Head of caudate nucleus (tissue), 42 donors: ENCODE measurements at regions of chr10 and their contacts with region 1.

Region 1: DNA sequence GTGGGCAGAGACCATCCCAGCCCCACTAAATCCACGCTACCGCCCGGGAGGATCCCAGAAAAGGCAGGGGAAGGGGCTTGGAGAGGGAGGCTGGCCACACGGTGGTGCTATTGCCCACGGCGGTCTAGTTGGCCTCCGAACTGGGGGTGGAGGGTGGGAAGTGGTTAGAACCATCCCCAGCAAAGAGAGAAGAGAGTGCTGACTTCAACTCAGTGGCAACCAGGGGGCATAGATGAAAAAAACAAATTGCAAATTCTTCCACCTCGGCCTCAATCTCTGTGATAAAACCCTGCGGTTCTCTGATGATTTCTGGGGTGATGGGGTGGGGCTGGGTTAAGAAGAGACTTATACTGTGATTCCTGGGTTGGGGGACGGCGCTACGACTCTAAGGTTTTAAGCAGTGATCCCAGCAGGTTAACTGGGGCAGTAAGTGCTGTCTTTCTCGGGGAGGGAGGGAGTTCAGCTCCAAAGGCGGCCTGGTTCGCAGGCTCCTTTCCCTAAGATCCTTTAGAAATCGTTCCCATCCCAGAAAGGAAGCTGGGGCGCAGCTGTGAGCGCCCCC is 154.5 kb upstream of the LYZL2 start:
- DNase-seq: peak; percentile 84 to 97 (median 92)

Region 2: DNA sequence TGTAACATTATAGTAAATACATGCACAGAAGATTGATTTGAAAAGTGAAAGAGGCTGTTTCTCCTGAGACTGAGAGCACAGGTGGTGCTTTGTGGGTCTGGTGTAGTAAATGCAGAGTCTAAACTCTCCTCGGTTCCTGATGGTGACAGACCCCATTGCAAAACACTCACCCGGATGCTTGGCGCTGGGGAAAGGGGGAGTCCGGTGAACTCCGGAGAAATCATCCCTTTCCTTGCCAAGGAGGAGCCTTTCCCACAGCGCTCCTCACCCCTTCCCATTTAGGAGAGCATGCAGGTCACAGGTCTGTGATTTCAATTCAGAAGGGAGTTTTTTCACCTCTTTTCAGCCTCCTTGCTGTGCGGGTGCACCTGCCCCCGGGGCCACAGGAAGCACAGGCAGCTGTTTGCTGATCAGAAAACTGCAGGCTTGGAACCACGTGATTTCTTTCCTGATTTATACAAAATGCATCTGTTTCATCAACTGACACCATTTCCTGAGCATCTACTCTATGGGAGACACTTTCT is 78.9 kb before region 1 on chr10:
- intact Hi-C with region 1: no loop called
- DNase-seq: no peak

Region 3: DNA sequence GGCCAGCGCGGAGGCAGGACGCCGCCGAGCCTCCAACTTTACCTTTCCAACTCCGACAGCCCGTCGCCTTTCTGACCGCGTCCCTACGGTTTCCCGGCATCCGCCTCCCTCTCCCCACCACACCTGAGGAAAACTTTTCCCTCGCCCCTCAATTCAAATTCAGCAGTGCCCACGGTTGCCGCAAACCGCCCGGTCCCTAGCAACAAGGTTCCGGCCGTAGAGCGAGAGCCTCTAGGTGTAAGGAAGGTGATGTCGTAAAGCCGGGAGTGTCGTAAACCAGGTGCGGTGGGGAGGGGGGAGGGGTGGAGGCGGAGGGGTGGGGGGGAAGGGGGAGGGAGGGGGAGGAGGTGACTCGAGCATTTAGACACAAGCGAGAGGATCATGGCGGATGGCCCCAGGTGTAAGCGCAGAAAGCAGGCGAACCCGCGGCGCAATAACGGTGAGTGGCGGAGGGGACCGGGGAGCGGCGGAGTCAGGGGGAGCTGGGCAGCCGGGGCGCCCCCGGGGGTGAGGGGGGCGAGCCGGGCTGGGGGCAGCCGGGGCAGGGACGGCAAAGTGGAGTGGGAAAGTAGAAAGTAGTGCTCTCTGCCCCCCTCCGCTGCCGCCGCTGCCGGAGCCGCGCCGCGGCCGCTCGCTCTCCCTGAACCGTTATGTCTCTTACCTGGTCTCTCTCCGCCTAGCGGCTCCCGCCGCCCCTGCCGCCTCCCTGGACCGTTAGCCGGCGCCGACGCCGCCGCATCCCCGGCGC is 535.0 kb after region 1 on chr10 and contains the start of gene ZEB1:
- intact Hi-C with region 1: loop called (anchors 10 kb)
- DNase-seq: peak; percentile 38 to 91 (median 76)

Region 4: DNA sequence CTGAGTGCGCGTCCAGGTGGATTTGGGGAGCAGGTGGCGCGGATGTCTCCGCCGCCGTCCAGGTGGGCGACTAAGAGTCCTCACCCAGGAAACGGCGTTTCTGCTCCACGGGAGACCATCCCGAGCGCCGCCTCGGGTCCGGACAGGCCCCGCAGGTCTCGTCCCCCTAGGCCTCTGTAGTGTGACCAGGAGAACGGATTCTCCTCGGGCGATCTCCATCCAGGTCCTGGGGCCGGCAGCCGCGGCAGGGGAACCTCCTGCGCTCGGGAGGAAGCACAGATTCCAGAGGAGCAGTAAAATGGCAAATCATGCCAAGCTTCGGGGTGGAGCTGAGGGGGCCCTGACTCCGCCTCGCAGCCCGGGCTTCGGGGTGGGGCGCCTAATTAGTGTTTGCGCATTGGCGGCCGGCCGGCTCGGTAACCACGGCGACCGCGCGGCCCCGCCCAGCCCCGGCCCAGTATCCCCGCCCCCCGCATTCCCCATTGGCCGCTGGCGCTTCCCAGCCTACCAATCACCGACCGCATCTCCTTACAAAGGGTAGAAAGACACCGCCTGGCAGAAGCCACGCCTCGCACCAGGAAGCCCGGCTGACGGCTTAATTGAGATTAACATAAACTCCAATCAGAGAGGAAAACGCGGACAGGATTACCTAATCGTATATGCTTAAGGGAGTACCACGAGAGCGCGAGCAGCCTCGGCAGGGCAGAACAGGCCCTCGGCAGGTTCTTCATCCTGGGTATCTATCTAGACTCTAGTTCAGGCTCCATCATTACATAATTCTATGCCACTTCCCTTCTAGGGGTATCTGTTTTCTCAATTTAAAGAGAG is 976.0 kb after region 1 on chr10:
- intact Hi-C with region 1: loop called (anchors 10 kb)
- DNase-seq: peak; percentile 92 to 99 (median 97)